Activated CD4-positive, alpha-beta T cell treated with anti-CD3 and anti-CD28 coated beads for 36 hours (primary cell): ENCODE measurements at regions of chr19 and their contacts with region 1.

Region 1: DNA sequence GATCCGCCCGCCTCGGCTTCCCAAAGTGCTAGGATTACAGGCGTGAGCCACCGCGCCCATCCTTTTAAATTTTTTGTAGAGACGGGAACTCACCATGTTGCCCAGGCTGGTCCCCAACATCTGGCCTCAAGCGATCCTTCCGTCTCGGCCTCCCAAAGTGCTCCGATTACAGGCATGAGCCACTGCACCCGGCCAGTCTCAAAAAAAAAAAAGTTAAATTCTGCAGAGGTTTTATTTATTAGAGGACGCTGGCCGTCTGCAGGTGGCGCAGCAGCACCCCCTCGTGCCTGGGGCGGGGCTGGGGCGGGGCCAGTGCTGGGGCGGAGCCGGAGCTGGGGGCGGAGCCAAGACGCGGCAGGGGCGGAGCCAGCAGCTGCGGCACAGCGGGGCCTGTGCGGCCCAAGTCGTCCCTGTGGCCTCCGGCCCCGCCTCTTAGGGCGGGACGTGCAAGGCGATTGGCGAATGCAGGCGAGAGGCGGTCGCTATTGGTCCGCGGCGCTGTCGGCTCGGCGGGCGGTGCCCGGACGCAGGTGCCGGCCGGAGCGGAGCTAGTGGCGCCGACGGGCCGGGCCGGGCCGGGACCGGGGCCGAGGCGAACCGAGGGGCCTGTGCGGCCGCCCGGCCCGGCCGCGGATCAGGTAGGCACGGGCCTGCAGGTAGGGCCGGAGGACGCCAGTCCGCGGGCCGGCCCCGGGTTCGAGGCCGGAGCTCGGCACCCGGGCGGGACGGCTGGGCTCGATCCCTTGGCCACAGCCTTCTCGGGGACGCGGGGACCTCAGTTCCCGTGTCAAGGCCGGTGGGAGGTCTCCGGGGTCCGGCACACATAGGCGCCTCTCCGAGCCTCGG is at the start of gene MARCHF2:
- DNase-seq: peak; percentile 97
- ATAC-seq: peak; percentile 100
- H3K4me3 Mint-ChIP-seq: peak within 1 kb of the TSS; percentile 50
- H3K27ac Mint-ChIP-seq: no peak within 1 kb of the TSS
- H3K4me1 Mint-ChIP-seq: peaks cover 5% of the 10 kb centered on the region
- H3K27me3 Mint-ChIP-seq: no peaks in the 10 kb centered on the region
- total RNA-seq, gene MARCHF2: 9.1 to 10.1 TPM

Region 2: DNA sequence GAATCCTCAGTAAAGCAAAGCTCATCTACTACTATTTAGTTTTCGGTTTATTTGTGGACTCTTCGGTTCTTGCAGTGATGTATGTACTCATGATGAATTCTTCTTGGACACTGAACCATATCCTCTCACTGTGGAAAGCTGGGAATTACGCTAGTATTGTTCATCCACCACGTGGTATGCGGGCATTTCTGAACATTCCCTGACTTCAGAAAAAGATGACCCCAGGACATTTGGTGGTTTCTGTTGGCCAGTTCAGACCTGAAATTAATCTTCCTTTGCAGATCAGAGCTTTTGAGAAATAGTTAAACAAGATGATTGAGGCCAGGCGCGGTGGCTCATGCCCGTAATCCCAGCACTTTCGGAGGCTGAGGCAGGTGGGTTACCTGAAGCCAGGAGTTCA is 238.3 kb before region 1 on chr19:
- CTCF ChIA-PET with region 1: no interaction called
- POLR2A ChIA-PET with region 1: no interaction called
- intact Hi-C with region 1: no loop called
- DNase-seq: no peak
- ATAC-seq: no peak
- H3K4me3 Mint-ChIP-seq: no peak overlapping the region
- H3K27ac Mint-ChIP-seq: no peak overlapping the region
- H3K4me1 Mint-ChIP-seq: no peaks in the 10 kb centered on the region
- H3K27me3 Mint-ChIP-seq: no peaks in the 10 kb centered on the region

Region 3: GRCh38 chr19:8363803-8364771 is 48.9 kb before region 1 on chr19 and contains the start of gene ANGPTL4:
- CTCF ChIA-PET with region 1: interaction called, 3 read pairs
- POLR2A ChIA-PET with region 1: interaction called, 3 read pairs
- intact Hi-C with region 1: loop called in 1 of 2 experiments (anchors 1 kb)
- DNase-seq: peak; percentile 91
- ATAC-seq: peak; percentile 80
- H3K4me3 Mint-ChIP-seq: peak within 1 kb of the TSS; percentile 75
- H3K27ac Mint-ChIP-seq: peak within 1 kb of the TSS; percentile 55
- H3K4me1 Mint-ChIP-seq: peaks cover 25% of the 10 kb centered on the region
- H3K27me3 Mint-ChIP-seq: peaks cover 48% of the 10 kb centered on the region
- total RNA-seq, gene ANGPTL4: 7.4 to 7.9 TPM

Region 4: GRCh38 chr19:8373867-8374813 is 38.9 kb before region 1 on chr19:
- CTCF ChIA-PET with region 1: no interaction called
- POLR2A ChIA-PET with region 1: no interaction called
- intact Hi-C with region 1: no loop called
- DNase-seq: no peak
- ATAC-seq: no peak
- H3K4me3 Mint-ChIP-seq: no peak overlapping the region
- H3K27ac Mint-ChIP-seq: no peak overlapping the region
- H3K4me1 Mint-ChIP-seq: peaks cover 8% of the 10 kb centered on the region
- H3K27me3 Mint-ChIP-seq: no peaks in the 10 kb centered on the region

Region 5: DNA sequence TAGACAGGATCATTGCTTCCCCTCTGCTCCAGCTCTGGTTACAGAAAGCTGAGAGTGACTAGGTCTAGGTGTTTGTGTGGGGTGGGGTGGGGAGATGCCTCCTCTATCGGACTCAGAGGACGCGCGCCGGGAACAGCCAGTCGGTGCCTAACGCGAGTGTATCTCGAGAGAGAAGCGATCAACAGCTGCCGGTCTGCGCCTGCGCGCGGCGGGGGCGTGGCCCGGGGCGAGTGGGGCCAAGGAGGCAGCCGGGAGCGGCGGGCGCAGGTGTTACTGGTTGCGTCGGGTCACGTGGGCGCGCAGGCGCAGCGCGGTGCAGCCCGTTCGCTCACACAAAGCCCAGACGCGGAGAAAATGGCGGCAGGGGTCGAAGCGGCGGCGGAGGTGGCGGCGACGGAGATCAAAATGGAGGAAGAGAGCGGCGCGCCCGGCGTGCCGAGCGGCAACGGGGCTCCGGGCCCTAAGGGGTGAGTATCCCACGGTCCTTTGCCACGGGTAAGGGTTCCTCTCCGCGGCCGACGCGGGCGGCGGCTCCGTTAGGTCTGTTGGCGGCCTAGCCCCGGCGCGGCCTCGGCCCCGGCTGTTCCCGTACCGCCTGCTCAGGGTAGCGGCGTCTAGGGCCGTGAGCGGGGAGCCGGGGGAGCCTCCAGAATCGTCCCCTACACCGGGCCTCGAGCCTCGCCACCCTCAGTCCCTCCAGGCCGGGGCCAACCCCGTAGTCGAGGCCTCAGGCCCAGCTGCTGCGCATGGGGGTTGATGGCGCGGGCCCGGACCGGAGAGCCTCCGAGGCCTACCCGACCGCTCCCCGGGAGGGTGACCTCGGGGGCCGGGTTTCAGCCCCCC is 31.9 kb after region 1 on chr19 and contains the start of gene HNRNPM:
- CTCF ChIA-PET with region 1: interaction called, 12 read pairs
- POLR2A ChIA-PET with region 1: interaction called, 4 read pairs
- intact Hi-C with region 1: loop called (anchors 1 to 5 kb)
- DNase-seq: peak; percentile 100
- ATAC-seq: peak; percentile 93
- H3K4me3 Mint-ChIP-seq: peak within 1 kb of the TSS; percentile 94
- H3K27ac Mint-ChIP-seq: peak within 1 kb of the TSS; percentile 97
- H3K4me1 Mint-ChIP-seq: peaks cover 39% of the 10 kb centered on the region
- H3K27me3 Mint-ChIP-seq: no peaks in the 10 kb centered on the region
- total RNA-seq, gene HNRNPM: 250 to 304 TPM

Region 6: DNA sequence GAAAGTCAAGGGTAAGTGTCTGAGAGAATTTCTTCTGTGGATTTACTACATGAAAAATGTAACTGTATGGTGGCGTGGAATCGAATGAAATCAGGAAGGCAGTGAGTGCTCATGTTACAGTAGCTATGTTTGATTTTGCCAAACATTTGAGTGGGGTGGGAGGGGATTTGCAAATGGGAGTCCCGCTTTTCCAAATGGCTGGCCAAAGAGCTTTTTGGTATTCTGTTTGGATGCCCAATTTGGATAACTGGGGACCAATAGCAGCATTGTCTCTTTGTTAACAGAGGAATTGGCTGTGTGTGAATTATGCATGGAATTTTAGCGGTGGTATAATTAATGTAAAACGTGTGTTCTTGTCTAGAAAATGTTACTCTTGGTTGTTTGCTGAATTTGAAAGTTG is 49.6 kb after region 1 on chr19:
- CTCF ChIA-PET with region 1: interaction called, 12 read pairs
- POLR2A ChIA-PET with region 1: no interaction called
- intact Hi-C with region 1: no loop called
- DNase-seq: no peak
- ATAC-seq: no peak
- H3K4me3 Mint-ChIP-seq: no peak overlapping the region
- H3K27ac Mint-ChIP-seq: no peak overlapping the region
- H3K4me1 Mint-ChIP-seq: peaks cover 55% of the 10 kb centered on the region
- H3K27me3 Mint-ChIP-seq: no peaks in the 10 kb centered on the region

Region 7: DNA sequence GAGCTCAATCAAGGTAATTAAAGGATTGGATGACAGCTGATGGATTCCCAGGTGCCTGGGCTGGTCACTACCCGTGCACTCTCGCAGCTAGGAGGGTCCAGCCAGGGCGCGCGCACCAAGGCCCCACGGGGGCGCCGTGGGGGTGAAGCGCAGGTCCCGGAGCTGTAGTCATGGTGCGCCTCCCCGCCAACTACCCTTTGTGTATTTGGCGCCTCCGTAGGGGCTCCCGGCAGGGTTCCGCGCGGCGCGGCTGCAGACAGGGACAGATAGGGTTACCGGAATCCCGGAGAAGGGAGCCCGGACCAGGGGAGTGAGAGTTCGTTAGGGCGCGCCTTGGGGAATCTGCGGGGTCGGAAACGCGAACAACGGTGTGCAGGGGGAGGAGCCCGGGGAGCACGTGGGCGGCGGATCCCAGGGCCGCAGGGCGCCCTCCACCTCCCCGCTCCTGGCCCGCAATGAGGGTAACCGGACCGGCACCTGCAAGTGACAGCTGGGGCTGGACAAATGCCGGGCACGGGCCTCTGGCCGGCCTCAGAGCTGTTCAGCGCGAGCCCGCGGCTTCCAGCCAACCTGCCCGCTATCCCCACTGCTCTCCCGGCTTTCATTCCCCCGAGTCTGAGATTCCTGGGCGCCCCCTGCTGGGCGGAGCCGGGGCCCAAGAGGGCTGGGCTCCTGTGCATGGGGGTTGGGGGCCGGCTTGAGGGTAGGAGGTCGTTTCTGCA is 92.8 kb after region 1 on chr19:
- CTCF ChIA-PET with region 1: interaction called, 13 read pairs
- POLR2A ChIA-PET with region 1: no interaction called
- intact Hi-C with region 1: loop called (anchors 1 to 5 kb)
- DNase-seq: peak; percentile 87
- ATAC-seq: peak; percentile 79
- H3K4me3 Mint-ChIP-seq: peak overlapping the region; percentile 80
- H3K27ac Mint-ChIP-seq: peak overlapping the region; percentile 80
- H3K4me1 Mint-ChIP-seq: peaks cover 18% of the 10 kb centered on the region
- H3K27me3 Mint-ChIP-seq: no peaks in the 10 kb centered on the region

Region 8: GRCh38 chr19:8592231-8593009 is 179.4 kb after region 1 on chr19:
- CTCF ChIA-PET with region 1: interaction called, 3 read pairs
- POLR2A ChIA-PET with region 1: no interaction called
- intact Hi-C with region 1: loop called in 1 of 2 experiments (anchors 1 kb)
- DNase-seq: peak; percentile 99
- ATAC-seq: peak; percentile 94
- H3K4me3 Mint-ChIP-seq: peak overlapping the region; percentile 70
- H3K27ac Mint-ChIP-seq: no peak overlapping the region
- H3K4me1 Mint-ChIP-seq: peaks cover 15% of the 10 kb centered on the region
- H3K27me3 Mint-ChIP-seq: no peaks in the 10 kb centered on the region

Region 9: DNA sequence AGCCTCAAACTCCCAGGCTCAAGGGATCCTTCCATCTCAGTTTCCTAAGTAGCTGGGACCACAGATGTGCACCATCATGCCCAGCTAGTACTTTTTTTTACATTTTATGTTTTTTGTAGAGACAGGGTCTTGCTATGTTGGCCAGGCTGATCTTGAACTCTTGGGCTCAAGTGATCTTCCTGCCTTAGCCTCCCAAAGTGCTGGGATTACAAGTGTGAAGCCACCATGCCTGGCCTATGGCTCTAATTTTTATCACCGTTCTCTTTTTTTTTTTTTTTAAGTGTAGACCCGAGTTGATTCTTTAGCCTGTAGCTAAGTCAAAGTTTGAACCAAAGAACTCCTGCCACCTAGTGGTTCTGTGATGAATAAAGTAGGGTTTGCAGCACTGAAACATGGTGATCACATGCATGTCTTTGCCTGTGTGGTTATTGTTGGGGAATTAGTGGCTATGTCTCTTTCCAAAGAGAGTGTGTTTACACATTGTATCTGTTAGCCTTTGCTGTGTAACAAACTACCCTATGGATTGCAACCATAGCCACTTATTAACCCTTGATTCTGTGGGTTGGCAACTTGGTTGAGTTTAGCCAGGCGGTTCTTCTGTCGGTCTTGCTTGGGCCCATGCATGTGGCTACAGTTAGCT is 229.0 kb after region 1 on chr19:
- CTCF ChIA-PET with region 1: no interaction called
- POLR2A ChIA-PET with region 1: no interaction called
- intact Hi-C with region 1: loop called in 1 of 2 experiments (anchors 1 kb)
- DNase-seq: no peak
- ATAC-seq: peak; percentile 57
- H3K4me3 Mint-ChIP-seq: no peak overlapping the region
- H3K27ac Mint-ChIP-seq: no peak overlapping the region
- H3K4me1 Mint-ChIP-seq: peaks cover 3% of the 10 kb centered on the region
- H3K27me3 Mint-ChIP-seq: peaks cover 8% of the 10 kb centered on the region